Activated CD4-positive, alpha-beta memory T cell treated with anti-CD3 and anti-CD28 coated beads, Interleukin-2, amount 10 ng/mL, durations not matched to agents 7 days and 5 days (primary cell): ENCODE measurements at regions of chr12 and their contacts with region 1.

Region 1: DNA sequence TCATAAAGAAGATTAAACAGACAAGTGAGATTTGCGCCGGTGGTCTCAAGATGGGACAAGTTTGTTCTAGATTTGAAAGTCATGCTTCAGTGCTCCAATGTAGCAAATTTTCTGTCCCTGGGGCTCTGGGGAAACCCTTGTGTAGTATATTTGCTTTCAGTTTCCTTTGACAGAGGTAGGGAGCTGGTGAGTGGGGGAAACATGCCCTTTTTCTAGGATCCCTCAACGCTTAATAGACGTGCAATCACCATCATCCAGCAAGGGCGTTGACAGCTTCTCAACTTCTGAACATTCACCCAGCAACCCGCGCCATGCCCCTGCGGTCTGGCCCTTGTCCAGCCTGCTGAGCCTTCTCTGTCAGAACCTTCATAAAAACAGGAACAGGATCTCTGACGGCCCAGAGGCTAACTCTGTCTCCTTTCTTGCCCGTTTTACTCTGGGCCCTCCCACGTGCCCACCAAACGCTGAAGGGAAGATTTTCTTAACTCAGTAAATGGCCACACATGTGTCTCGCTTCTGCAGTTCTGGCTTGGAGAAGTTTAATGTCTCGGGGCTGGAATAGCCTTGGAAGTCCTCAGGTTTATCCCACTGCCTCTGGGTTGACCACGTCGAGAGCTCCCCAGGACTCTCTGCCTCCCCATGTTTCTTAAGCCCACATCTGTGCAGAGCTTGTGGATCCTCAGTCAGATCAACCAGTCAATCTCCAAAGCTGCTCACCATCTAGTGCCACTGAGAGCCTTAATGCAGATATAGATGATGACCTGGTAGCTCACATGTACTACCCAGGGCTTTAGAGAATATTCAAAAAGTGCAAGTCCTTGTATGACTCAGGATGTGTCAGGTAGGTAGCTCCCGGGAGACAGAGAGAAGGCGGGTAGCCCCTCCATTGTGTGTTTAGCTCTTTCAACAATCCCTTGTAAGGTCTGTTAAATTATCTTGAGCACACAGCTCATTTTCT is 58.1 kb upstream of the CCND2 start:
- DNase-seq: peak; percentile 24
- H3K4me3 Mint-ChIP-seq: peak overlapping the region; percentile 59
- H3K27ac Mint-ChIP-seq: peak overlapping the region; percentile 59
- H3K4me1 Mint-ChIP-seq: peaks cover 45% of the 10 kb centered on the region
- H3K27me3 Mint-ChIP-seq: peaks cover 4% of the 10 kb centered on the region

Region 2: GRCh38 chr12:3973978-3974644 is 241.4 kb before region 1 on chr12:
- CTCF ChIA-PET with region 1: no interaction called
- POLR2A ChIA-PET with region 1: no interaction called
- DNase-seq: no peak
- H3K4me3 Mint-ChIP-seq: no peak overlapping the region
- H3K27ac Mint-ChIP-seq: no peak overlapping the region
- H3K4me1 Mint-ChIP-seq: peaks cover 36% of the 10 kb centered on the region
- H3K27me3 Mint-ChIP-seq: no peaks in the 10 kb centered on the region

Region 3: GRCh38 chr12:4269279-4269991 is 53.9 kb after region 1 on chr12:
- CTCF ChIA-PET with region 1: interaction called, 4 read pairs
- POLR2A ChIA-PET with region 1: interaction called, 21 read pairs
- DNase-seq: peak; percentile 93
- H3K4me3 Mint-ChIP-seq: peak overlapping the region; percentile 97
- H3K27ac Mint-ChIP-seq: peak overlapping the region; percentile 99
- H3K4me1 Mint-ChIP-seq: peaks cover 24% of the 10 kb centered on the region
- H3K27me3 Mint-ChIP-seq: peaks cover 26% of the 10 kb centered on the region